Activated naive CD4-positive, alpha-beta T cell treated with anti-CD3 and anti-CD28 coated beads for 36 hours (primary cell): ENCODE measurements at regions of chr1 and their contacts with region 1.

Region 1: DNA sequence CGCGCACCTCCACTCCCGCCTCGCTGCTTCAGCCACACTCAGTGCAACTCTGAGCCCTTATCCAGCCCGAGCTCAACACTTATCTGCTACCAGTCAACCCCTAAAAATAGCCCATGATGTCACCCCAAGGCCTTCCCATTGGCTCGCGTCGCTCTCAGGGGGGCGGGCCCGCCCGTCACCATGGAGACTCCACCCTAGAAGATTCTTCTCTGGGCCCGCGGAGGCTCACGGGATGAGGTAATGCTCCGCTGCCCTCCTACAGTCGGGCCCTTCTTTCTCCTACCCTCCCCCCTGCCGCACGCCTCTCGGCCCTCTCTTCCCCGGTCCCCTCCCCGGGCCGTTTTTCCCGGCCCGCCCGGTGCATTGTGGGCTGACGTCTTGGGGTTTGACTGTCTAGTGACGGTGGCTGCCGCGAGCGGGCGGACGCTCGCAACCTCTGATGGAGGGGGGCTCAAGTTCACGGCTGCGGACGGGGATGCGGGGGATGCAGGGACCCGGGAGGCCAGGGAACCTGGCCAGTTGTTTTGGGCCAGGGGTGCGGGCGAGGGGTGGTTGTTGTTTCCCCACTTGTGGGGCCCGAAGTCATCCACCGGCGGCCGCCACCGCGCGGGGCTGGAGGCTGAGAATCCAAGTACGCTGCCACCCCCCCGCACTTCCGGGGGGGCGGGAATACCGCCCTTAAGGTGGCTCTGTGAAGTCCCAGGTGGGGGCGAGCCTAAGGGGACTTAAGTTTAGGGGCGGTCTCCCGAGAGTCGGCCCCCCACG is at the start of gene JUN:
- DNase-seq: peak; percentile 99
- H3K4me3 Mint-ChIP-seq: peak within 1 kb of the TSS; percentile 97
- H3K27ac Mint-ChIP-seq: peak within 1 kb of the TSS; percentile 99
- H3K4me1 Mint-ChIP-seq: peaks cover 16% of the 10 kb centered on the region
- H3K27me3 Mint-ChIP-seq: no peaks in the 10 kb centered on the region
- total RNA-seq, gene JUN: 24.2 to 25.9 TPM

Region 2: DNA sequence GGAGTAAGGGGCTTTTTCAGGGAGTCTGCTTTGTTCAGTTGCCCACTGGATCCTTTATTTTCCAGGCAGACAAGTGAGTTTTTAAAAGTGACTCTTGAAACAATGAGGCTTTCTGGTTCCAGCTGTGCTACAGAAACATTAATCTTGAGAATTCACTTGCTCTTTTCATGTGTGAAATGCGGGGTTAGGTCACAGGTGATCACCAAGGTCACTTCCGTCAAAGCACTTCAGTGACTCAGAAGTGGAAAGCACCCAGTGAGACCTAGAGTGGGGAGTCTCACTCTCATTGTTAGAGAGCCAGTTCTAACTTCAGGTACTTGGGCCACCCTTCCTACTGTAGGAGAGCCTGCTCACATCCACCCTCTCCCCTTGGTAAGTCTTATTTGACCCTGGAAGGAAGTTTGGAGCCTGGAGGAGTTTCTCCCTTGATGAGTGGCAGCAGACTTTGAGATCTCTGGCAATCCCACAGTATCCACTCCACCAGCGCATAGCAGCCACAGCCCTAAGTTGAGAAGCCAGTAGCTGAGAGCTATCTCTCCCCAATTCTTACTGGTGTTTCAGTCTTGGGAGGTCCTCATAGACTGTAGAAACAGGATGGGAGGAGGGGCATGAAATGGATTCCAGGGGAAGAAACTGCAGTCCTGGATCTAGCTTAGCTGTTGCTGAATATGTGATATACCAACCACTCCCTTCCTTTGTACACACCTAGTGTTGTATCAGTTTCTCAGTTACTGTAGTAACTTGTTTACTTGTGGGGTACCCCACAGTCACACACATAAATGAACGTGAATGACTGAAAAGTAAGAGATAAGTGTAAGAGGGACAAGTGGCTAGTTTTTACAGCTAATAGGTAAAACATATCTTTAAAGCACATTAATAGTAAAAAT is 210.2 kb before region 1 on chr1:
- CTCF ChIA-PET with region 1: no interaction called
- intact Hi-C with region 1: loop called (anchors 2 kb)
- DNase-seq: peak; percentile 72
- H3K4me3 Mint-ChIP-seq: no peak overlapping the region
- H3K27ac Mint-ChIP-seq: peak overlapping the region; percentile 11
- H3K4me1 Mint-ChIP-seq: peaks cover 33% of the 10 kb centered on the region
- H3K27me3 Mint-ChIP-seq: peaks cover 44% of the 10 kb centered on the region

Region 3: GRCh38 chr1:58816072-58816746 is 32.0 kb after region 1 on chr1:
- CTCF ChIA-PET with region 1: interaction called, 3 read pairs
- intact Hi-C with region 1: loop called (anchors 1 kb)
- DNase-seq: peak; percentile 90
- H3K4me3 Mint-ChIP-seq: peak overlapping the region; percentile 81
- H3K27ac Mint-ChIP-seq: peak overlapping the region; percentile 71
- H3K4me1 Mint-ChIP-seq: peaks cover 33% of the 10 kb centered on the region
- H3K27me3 Mint-ChIP-seq: no peaks in the 10 kb centered on the region

Region 4: GRCh38 chr1:58903514-58904298 is 119.5 kb after region 1 on chr1:
- CTCF ChIA-PET with region 1: no interaction called
- intact Hi-C with region 1: loop called (anchors 1 kb)
- DNase-seq: peak; percentile 90
- H3K4me3 Mint-ChIP-seq: peak overlapping the region; percentile 71
- H3K27ac Mint-ChIP-seq: peak overlapping the region; percentile 43
- H3K4me1 Mint-ChIP-seq: peaks cover 8% of the 10 kb centered on the region
- H3K27me3 Mint-ChIP-seq: no peaks in the 10 kb centered on the region

Region 5: GRCh38 chr1:59046730-59047157 is 262.6 kb after region 1 on chr1:
- CTCF ChIA-PET with region 1: no interaction called
- intact Hi-C with region 1: loop called (anchors 1 kb)
- DNase-seq: peak; percentile 79
- H3K4me3 Mint-ChIP-seq: peak overlapping the region; percentile 37
- H3K27ac Mint-ChIP-seq: peak overlapping the region; percentile 86
- H3K4me1 Mint-ChIP-seq: peaks cover 30% of the 10 kb centered on the region
- H3K27me3 Mint-ChIP-seq: no peaks in the 10 kb centered on the region

Region 6: DNA sequence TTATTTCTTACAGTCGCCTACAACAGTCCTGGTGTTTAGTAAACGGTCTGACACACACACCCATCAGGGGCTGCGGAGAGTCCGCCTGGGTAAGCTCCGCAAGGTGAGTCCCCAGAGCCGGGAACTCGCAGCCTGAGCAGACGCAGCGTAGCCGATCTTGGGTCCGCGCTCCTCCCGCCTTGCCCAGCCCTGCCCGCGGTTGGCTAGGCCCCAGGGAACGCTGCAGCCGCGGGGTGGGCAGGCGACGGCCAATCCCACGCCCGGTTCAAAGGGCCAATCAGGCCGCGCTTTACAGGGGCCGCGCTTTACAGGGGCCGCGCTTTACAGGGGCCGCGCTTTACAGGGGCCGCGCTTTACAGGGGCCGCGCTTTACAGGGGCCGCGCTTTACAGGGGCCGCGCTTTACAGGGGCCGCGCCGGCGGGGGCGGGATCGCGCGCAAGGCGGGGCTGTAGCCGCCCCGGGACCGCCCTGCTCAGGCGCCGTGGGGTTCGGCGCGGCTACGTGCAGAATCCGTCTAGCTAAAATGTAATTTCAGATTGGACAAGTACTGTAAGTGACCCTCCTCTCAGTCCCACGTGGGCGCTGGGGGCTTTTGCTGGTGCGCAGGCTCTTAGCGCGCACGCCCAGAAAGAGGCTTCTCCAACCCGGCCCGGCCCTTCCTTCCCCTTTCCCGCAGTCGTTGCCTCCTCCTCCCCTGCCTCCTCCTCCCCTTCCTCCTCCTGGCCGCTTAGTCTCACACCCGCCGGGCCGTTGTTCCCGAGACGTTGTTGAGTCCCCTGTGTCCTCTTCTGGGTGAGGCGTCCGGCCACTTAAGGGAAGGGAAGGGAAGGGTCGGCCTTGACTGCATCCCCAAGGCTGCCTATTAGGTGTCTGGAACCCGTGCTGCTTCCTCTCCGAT is 512.4 kb after region 1 on chr1 and contains the start of gene FGGY:
- CTCF ChIA-PET with region 1: no interaction called
- intact Hi-C with region 1: loop called (anchors 1 kb)
- DNase-seq: peak; percentile 90
- H3K4me3 Mint-ChIP-seq: peak within 1 kb of the TSS; percentile 86
- H3K27ac Mint-ChIP-seq: peak within 1 kb of the TSS; percentile 79
- H3K4me1 Mint-ChIP-seq: peaks cover 16% of the 10 kb centered on the region
- H3K27me3 Mint-ChIP-seq: no peaks in the 10 kb centered on the region
- total RNA-seq, gene FGGY: 9.8 to 10.9 TPM

Region 7: DNA sequence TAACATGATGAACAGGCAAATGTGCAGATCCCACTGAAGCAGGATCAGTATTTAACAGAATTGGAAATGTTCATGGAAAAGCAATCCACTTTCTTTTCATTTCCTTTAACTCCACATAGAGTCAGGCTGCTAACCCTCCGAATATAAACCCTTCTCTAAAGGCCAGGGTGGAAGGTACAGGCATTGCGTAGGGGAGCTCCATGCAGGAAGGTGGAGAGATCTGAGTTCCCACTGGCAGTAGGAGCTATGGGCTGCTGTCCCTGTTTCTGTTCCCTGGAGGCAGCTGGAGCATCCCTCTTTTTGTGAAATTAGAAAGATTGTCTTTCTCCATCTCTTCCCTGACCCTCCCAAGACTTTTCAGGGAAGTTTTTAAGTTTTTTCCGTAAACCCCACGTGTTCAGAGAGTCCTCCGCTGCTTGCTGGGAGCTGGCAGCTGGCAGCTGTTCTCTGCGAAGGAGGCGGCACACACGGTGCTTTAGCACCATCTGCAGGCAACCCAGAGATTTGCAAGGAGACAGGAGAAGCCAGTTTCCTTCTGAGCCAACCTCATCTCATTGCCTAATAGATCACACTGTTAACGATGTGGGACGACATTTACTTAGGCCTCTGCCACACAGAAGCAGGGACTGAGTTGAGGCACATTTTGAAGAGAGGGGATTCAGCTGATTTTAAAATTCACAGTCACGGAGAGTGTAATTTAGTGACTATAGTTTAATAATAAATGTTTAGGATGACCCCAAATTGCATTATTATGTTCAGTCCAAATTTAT is 975.2 kb after region 1 on chr1:
- CTCF ChIA-PET with region 1: interaction called, 5 read pairs
- intact Hi-C with region 1: loop called (anchors 2 kb)
- DNase-seq: peak; percentile 83
- H3K4me3 Mint-ChIP-seq: peak overlapping the region; percentile 47
- H3K27ac Mint-ChIP-seq: peak overlapping the region; percentile 53
- H3K4me1 Mint-ChIP-seq: peaks cover 4% of the 10 kb centered on the region
- H3K27me3 Mint-ChIP-seq: no peaks in the 10 kb centered on the region